Spleen (tissue), 13 donors: ENCODE measurements at regions of chr4 and their contacts with region 1.

Region 1: GRCh38 chr4:153083447-153083947 is 120.7 kb upstream of the TRIM2 start:
- DNase-seq: peak; percentile 77
- H3K4me3 ChIP-seq: no peak overlapping the region
- H3K27ac ChIP-seq: peak overlapping the region in 2 of 8 donors; percentile 0 to 34
- H3K4me1 ChIP-seq: peaks cover 19 to 42% (median 29%) of the 10 kb centered on the region in 6 donors
- H3K27me3 ChIP-seq: no peaks in the 10 kb centered on the region
- CTCF ChIP-seq: peak; percentile 17 to 80 (median 65)
- POLR2A ChIP-seq: no peak

Region 2: GRCh38 chr4:152515678-152516077 is 567.8 kb before region 1 on chr4:
- intact Hi-C with region 1: no loop called
- DNase-seq: no peak
- H3K4me3 ChIP-seq: no peak overlapping the region
- H3K27ac ChIP-seq: no peak overlapping the region
- H3K4me1 ChIP-seq: peaks cover 0 to 40% (median 19%) of the 10 kb centered on the region in 6 donors
- H3K27me3 ChIP-seq: no peaks in the 10 kb centered on the region
- CTCF ChIP-seq: no peak
- POLR2A ChIP-seq: no peak

Region 3: DNA sequence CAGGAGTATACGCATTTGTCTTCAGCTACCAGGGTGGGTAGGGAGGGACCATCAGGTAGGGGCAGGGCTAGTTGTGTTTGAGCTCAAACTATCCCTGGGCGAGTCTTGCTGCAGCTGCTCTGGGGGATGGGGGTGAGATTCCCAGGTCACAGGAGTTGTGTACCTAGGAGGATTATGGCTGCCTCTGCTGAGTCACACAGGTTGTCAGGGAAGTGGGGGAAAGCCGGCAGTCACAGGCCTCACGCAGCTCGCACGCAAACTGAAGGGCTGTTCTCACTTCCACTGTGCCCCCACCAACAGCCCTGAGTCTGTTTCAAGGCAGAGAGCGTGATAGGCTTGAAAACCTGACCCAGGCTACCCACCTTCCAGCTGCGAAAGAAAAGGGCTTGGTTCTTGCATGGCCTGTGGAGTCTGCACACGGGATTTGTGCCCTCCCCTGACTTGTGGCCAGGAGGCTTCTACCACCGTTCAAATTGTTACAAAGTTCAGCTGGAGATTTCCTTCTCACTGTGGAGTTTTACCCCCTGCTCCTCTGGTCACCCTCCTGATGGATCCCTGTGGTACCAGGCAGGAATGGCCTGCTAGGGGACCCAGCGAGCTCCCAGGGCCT is 239.9 kb before region 1 on chr4:
- intact Hi-C with region 1: loop called (anchors 2 kb)
- DNase-seq: no peak
- H3K4me3 ChIP-seq: no peak overlapping the region
- H3K27ac ChIP-seq: no peak overlapping the region
- H3K4me1 ChIP-seq: peaks cover 0 to 15% (median 3%) of the 10 kb centered on the region in 6 donors
- H3K27me3 ChIP-seq: no peaks in the 10 kb centered on the region
- CTCF ChIP-seq: no peak
- POLR2A ChIP-seq: no peak

Region 4: GRCh38 chr4:152937336-152938236 is 145.9 kb before region 1 on chr4:
- intact Hi-C with region 1: loop called (anchors 10 kb)
- DNase-seq: peak; percentile 79
- H3K4me3 ChIP-seq: peak overlapping the region; percentile 52 to 86 (median 76)
- H3K27ac ChIP-seq: peak overlapping the region; percentile 57 to 80 (median 68)
- H3K4me1 ChIP-seq: peaks cover 9 to 51% (median 36%) of the 10 kb centered on the region in 6 donors
- H3K27me3 ChIP-seq: peaks cover 0 to 74% (median 26%) of the 10 kb centered on the region in 7 donors
- CTCF ChIP-seq: no peak
- POLR2A ChIP-seq: no peak